ENCODE measurements at regions of chr4 and their contacts with region 1.

Region 1: GRCh38 chr4:111283061-111283677 is 660.3 kb upstream of the PITX2 start:
- DNase-seq: peak; percentile 68
- ATAC-seq: no peak
- H3K4me3 ChIP-seq: no peak overlapping the region
- H3K27ac ChIP-seq: no peak overlapping the region
- H3K4me1 ChIP-seq: no peaks in the 10 kb centered on the region
- H3K27me3 ChIP-seq: 0 out of 2 replicates have a peak, but pooled peaks cover 4% of the 10 kb centered on the region
- CTCF ChIP-seq: peak; percentile 71

Region 2: GRCh38 chr4:110631584-110632505 is 651.3 kb before region 1 on chr4:
- CTCF ChIA-PET with region 1: no interaction called
- POLR2A ChIA-PET with region 1: no interaction called
- intact Hi-C with region 1: loop called (anchors 5 kb)
- DNase-seq: peak; percentile 80
- ATAC-seq: peak; percentile 99
- H3K4me3 ChIP-seq: peak overlapping the region; percentile 61
- H3K27ac ChIP-seq: no peak overlapping the region
- H3K4me1 ChIP-seq: peaks cover 6% of the 10 kb centered on the region; the same call in 1 of the 2 replicates
- H3K27me3 ChIP-seq: peaks cover 77% of the 10 kb centered on the region
- CTCF ChIP-seq: peak; percentile 85

Region 3: DNA sequence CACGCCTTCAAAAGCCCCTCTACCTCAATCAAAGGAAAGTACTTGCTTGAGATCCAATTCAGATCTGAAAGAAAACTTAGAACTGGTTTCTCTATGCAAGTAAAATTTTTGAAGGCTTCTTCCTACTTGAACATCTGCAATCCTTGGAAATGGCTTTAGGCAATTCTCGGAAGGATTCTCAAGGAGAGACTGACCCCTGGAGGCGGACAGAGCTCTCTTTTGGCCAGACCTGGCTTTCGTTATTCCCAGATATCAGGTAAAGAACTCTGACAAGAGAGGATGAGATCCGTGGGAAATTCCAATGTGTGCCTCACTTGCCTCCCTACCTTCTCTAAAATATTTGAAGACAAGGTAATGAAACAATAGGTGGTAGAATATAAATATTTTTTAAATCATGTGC is 191.8 kb after region 1 on chr4:
- CTCF ChIA-PET with region 1: no interaction called
- POLR2A ChIA-PET with region 1: no interaction called
- intact Hi-C with region 1: loop called (anchors 10 kb)
- DNase-seq: peak; percentile 52
- ATAC-seq: peak; percentile 30; the same call in 1 of the 2 replicates
- H3K4me3 ChIP-seq: no peak overlapping the region
- H3K27ac ChIP-seq: 0 out of 2 replicates have a peak overlapping the region, but pooled peaks have one; percentile 32
- H3K4me1 ChIP-seq: peaks cover 6% of the 10 kb centered on the region; the same call in 1 of the 2 replicates
- H3K27me3 ChIP-seq: no peaks in the 10 kb centered on the region
- CTCF ChIP-seq: peak; percentile 60